ENCODE measurements at regions of chr17 and their contacts with region 1.

Region 1: DNA sequence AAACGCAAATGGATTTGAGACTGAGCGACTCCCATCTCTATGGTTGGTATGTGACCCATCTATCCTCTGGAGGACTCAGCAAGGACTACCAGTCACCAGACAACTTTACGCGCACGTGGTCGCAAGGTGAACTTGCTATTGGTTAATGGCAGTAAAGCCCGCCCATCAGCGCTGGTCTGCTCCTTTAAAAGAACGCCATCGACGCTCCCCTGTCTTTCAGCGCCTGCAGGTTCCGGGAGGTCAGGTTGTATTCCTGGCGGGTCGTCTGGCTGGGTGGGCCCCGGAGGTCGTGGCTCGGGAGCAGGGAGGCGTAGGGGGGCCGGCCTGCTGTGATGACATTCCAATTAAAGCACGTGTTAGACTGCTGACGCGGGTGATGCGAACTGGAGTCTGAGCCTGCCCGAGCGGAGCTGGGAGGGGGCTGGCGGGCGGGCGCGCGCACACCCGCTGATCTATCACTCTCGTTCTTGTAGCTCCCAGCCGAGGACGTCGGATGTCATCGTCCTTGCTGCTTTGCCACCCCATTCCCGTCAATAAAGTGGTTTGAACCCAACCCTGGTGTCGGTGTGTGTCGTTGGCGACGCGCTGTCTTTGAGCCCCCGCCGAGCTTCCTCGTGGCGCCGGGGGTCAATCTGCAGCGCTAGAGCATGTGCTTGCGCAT is 15.9 kb upstream of the ERN1 start:
- DNase-seq: peak; percentile 99 to 100
- ATAC-seq: peak; percentile 80 to 92
- H3K4me3 ChIP-seq: peak overlapping the region; percentile 73
- H3K27ac ChIP-seq: peak overlapping the region; percentile 93 to 98
- H3K4me1 ChIP-seq: peaks cover 27% of the 10 kb centered on the region; the same call in 2 of the 3 replicates
- CTCF ChIP-seq: no peak
- EP300 ChIP-seq: no peak
- POLR2A ChIP-seq: peak; percentile 97
- RAD21 ChIP-seq: no peak

Region 2: GRCh38 chr17:64056269-64057005 is 89.5 kb before region 1 on chr17:
- CTCF ChIA-PET with region 1: interaction called, 3 read pairs
- POLR2A ChIA-PET with region 1: interaction called, 15 read pairs
- DNase-seq: no peak
- ATAC-seq: peak in 1 of 2 experiments; percentile 28; a peak in 3 of 6 replicates
- H3K4me3 ChIP-seq: no peak overlapping the region
- H3K27ac ChIP-seq: peak overlapping the region in 1 of 2 experiments; percentile 11; a peak in 1 of 6 replicates
- H3K4me1 ChIP-seq: peaks cover 29% of the 10 kb centered on the region
- CTCF ChIP-seq: no peak
- EP300 ChIP-seq: no peak
- POLR2A ChIP-seq: no peak
- RAD21 ChIP-seq: no peak

Region 3: DNA sequence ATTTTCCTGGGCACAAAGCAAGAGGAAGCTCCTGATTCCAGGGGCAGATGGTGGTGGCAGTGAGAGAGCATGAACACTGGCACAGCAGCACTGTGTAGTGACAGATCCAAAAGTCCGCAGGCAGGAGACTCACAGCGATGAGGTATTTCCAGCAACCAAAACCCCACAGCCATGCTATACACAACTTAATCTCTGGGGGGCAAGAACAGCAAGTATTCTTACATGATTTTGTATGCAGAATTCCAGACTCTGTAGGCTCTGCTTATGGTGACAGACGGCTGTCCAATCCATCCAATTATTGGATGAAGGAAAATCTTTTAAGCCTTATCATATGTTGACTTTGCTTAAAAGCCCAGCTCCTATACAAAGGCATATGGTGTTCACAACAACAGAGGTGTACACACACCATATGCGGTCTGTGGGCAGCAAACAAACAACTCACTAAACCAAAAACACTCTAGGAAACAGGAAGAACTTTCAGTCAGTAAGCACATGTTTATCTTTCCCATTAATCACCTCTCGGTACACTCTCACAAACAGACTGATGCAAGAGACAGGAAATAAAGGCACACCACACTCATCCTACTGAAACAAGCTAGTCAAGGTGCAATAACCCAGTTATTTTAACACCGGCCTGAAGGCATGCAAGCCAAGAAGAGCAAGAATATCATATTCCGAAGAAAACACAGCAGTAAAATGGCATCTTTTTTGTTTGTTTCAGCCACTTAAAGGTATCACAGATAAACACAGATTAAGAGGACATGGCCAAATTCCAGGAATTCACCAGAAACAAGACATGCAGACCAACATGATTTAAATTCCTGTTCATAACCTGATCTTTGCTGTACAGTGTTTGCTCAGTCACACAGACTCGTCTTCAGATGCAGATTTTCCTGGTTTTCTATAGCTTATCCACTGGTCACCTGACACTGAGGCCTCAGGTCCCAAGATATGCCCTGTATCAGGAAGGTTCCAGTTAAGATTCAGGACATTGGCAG is 63.8 kb before region 1 on chr17:
- CTCF ChIA-PET with region 1: interaction called, 3 read pairs
- POLR2A ChIA-PET with region 1: interaction called, 17 read pairs
- DNase-seq: peak; percentile 79 to 93
- ATAC-seq: peak; percentile 85 to 95
- H3K4me3 ChIP-seq: peak overlapping the region; percentile 2; the same call in 1 of the 3 replicates
- H3K27ac ChIP-seq: peak overlapping the region; percentile 88 to 89
- H3K4me1 ChIP-seq: peaks cover 77% of the 10 kb centered on the region
- CTCF ChIP-seq: no peak
- EP300 ChIP-seq: peak; percentile 87 to 93; a peak in 4 of 5 replicates
- POLR2A ChIP-seq: no peak
- RAD21 ChIP-seq: peak in 1 of 2 experiments; percentile 49; a peak in 3 of 5 replicates

Region 4: GRCh38 chr17:64240741-64241347 is 95.0 kb after region 1 on chr17:
- CTCF ChIA-PET with region 1: no interaction called
- POLR2A ChIA-PET with region 1: interaction called, 12 read pairs
- DNase-seq: no peak
- ATAC-seq: peak in 1 of 2 experiments; percentile 36; a peak in 2 of 6 replicates
- H3K4me3 ChIP-seq: no peak overlapping the region
- H3K27ac ChIP-seq: no peak overlapping the region
- H3K4me1 ChIP-seq: peaks cover 15% of the 10 kb centered on the region
- CTCF ChIP-seq: no peak
- EP300 ChIP-seq: no peak
- POLR2A ChIP-seq: no peak
- RAD21 ChIP-seq: no peak

Region 5: DNA sequence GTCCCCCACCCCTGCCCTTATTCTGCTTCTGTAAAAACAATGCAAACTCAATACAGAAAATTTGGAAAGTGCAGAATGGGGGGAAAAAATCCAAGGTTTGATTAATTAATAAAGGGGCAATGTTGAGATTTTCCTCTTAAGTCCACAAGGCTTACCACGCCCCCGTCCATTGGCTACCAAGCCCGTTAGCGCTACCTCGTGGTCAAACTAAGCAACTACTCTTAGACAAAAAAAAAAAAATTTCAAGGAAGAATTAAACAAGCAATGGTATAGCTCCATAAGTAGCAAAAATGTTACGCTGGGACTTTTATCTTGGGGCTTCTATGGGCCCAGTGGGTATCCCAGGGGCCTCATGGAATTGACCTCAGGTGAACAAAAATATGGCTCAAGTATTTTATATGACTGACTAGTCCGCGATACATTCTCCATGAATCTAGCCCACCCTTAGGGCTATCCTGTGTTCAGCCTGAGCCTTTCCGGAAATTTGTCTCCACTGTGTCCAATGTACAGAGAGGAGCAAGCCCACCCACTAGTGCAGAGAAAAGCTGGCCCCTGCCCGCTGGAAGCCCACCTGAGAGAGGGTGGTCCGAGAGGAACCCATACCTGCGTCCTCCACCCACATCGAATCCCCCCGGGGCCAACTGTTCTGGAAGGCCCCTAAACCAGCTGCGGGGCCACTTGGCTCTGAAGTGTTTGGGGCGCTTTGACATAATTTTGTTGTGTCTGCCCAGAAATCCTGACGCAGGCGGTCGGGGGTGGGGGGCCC is 136.3 kb after region 1 on chr17:
- CTCF ChIA-PET with region 1: interaction called, 23 read pairs
- POLR2A ChIA-PET with region 1: interaction called, 22 read pairs
- DNase-seq: peak; percentile 68 to 88
- ATAC-seq: peak; percentile 64 to 87; a peak in 5 of 6 replicates
- H3K4me3 ChIP-seq: no peak overlapping the region
- H3K27ac ChIP-seq: peak overlapping the region in 1 of 2 experiments; percentile 27; a peak in 1 of 6 replicates
- H3K4me1 ChIP-seq: no peaks in the 10 kb centered on the region
- CTCF ChIP-seq: peak; percentile 92
- EP300 ChIP-seq: no peak
- POLR2A ChIP-seq: no peak
- RAD21 ChIP-seq: peak; percentile 87 to 94

Measured in A549 (cell line).